Activated CD8-positive, alpha-beta memory T cell treated with anti-CD3 and anti-CD28 coated beads, Interleukin-2, amount 10 ng/mL, durations not matched to agents 7 days and 5 days (primary cell): ENCODE measurements at regions of chr3 and their contacts with region 1.

Region 1: DNA sequence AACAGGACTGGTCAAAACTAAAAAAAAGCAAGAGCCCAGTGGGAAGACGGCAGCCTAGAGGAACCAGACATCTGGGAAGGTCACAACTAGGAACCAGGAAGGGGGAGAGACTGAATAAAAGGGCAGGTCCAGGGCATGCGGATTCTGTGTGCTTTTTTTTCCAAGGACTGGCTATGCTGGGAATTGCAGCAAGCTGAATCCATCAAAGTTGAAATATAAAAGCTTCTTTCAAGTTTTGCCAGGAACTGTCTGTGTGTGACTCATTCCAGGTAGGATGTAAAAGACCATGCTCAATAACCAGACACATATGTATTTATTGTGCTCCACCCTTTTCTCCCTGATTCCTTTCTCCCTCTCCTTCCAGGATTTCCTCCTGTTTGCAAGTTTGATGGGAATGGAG is 47.9 kb upstream of the CCDC80 start:
- DNase-seq: no peak
- ATAC-seq: no peak
- H3K4me3 Mint-ChIP-seq: no peak overlapping the region
- H3K27ac Mint-ChIP-seq: peak overlapping the region; percentile 63
- H3K4me1 Mint-ChIP-seq: peaks cover 28% of the 10 kb centered on the region
- H3K27me3 Mint-ChIP-seq: peaks cover 9% of the 10 kb centered on the region

Region 2: GRCh38 chr3:112676659-112677234 is 12.1 kb before region 1 on chr3:
- CTCF ChIA-PET with region 1: interaction called, 13 read pairs
- DNase-seq: peak; percentile 98
- ATAC-seq: peak; percentile 91
- H3K4me3 Mint-ChIP-seq: peak overlapping the region; percentile 53
- H3K27ac Mint-ChIP-seq: peak overlapping the region; percentile 98
- H3K4me1 Mint-ChIP-seq: peaks cover 70% of the 10 kb centered on the region
- H3K27me3 Mint-ChIP-seq: peaks cover 2% of the 10 kb centered on the region